SK-N-SH (cell line): ENCODE measurements at regions of chr9 and their contacts with region 1.

Region 1: DNA sequence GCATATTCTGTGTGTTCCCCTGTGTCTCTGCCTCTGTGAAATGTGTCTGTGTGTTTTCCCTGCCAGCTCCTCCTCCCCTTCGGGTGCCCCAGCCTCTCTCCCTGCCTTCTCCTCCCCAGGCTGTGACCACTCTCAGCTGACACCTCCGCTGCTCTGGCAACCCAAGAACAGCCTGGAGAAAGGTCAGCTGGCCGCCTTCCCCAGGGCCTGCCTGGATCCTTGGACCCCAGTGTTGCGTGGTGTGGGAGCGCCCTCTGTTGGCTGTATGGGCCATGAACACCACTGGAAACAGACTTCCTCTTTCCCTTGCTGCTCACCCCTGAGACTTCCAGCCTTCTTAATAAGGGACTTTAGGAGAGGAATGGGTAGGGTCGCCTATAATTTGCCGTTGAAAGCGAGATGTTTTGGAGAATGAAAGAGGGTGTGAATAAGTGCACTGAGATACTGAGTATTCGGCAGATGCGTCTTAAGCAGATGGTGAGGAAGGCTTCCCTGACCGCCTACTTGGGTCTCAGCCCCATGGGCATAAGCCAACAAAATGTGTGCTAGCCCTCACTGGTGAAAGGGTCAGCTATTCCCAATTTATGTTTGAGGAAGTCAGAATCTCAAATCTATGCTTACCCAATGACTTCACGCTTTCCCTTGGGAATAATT is 114.9 kb upstream of the TRIM32 start:
- DNase-seq: peak; percentile 84
- H3K4me3 ChIP-seq: no peak overlapping the region; a peak in 1 of 4 replicates
- H3K27ac ChIP-seq: peak overlapping the region in 1 of 2 experiments; percentile 16; a peak in 1 of 4 replicates
- H3K4me1 ChIP-seq: peaks cover 4 to 49% of the 10 kb centered on the region in 2 experiments; a peak in 2 of 4 replicates
- H3K27me3 ChIP-seq: no peaks in the 10 kb centered on the region
- CTCF ChIP-seq: peak; percentile 92
- EP300 ChIP-seq: 0 out of 4 replicates have a peak, but pooled peaks of 1 of the 2 experiments have one; percentile 10
- RAD21 ChIP-seq: peak; percentile 98

Region 2: DNA sequence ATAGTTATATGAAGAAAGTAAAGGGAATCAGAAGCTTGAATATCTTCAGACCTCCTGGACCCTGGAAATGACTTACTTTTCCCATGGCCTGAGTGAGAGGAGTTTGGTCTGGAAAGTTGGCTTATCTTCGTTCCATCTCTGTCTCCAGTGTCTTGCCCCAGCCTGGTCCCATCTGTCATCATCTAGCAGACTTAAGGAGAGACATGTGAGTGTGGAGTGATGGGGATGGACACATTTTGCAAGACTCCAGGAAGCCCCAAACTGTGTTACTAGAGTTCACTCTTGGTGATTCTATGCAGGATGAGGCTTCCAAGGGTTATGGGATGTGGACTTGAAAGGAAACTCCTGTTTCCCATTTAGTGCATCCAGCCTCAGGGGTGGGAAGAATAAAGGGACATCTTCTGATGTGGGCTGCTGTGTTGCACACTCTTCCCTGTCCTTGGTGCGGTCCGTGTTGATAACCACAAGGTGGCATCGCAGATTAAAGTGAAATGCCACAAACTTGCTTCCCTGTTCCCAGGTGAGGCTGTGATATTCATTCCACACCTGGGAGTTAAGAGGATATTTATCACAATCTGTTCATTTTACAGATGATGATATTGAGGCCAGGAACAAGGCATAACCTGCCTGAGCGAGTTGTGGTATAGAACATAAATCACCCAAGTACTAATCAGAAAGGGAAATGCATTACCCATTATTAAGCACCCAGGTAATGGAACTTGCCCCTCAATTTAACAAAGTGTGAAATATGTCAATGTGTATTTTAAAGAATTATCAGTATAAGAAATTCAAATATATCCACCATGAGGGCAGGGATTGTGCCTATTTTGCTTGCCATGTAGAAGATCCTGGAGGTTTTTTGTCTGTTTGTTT is 688.5 kb before region 1 on chr9:
- CTCF ChIA-PET with region 1: interaction called, 11 read pairs
- POLR2A ChIA-PET with region 1: no interaction called
- DNase-seq: peak; percentile 19
- H3K4me3 ChIP-seq: no peak overlapping the region
- H3K27ac ChIP-seq: no peak overlapping the region; a peak in 1 of 4 replicates
- H3K4me1 ChIP-seq: peaks cover 0 to 14% of the 10 kb centered on the region in 2 experiments; a peak in 2 of 4 replicates
- H3K27me3 ChIP-seq: no peaks in the 10 kb centered on the region
- CTCF ChIP-seq: peak; percentile 74
- EP300 ChIP-seq: no peak
- RAD21 ChIP-seq: peak; percentile 80

Region 3: GRCh38 chr9:116558818-116559540 is 13.2 kb before region 1 on chr9:
- CTCF ChIA-PET with region 1: interaction called, 19 read pairs
- POLR2A ChIA-PET with region 1: no interaction called
- DNase-seq: no peak
- H3K4me3 ChIP-seq: no peak overlapping the region
- H3K27ac ChIP-seq: no peak overlapping the region
- H3K4me1 ChIP-seq: no peaks in the 10 kb centered on the region; a peak in 1 of 4 replicates
- H3K27me3 ChIP-seq: no peaks in the 10 kb centered on the region
- CTCF ChIP-seq: no peak
- EP300 ChIP-seq: no peak
- RAD21 ChIP-seq: no peak

Region 4: DNA sequence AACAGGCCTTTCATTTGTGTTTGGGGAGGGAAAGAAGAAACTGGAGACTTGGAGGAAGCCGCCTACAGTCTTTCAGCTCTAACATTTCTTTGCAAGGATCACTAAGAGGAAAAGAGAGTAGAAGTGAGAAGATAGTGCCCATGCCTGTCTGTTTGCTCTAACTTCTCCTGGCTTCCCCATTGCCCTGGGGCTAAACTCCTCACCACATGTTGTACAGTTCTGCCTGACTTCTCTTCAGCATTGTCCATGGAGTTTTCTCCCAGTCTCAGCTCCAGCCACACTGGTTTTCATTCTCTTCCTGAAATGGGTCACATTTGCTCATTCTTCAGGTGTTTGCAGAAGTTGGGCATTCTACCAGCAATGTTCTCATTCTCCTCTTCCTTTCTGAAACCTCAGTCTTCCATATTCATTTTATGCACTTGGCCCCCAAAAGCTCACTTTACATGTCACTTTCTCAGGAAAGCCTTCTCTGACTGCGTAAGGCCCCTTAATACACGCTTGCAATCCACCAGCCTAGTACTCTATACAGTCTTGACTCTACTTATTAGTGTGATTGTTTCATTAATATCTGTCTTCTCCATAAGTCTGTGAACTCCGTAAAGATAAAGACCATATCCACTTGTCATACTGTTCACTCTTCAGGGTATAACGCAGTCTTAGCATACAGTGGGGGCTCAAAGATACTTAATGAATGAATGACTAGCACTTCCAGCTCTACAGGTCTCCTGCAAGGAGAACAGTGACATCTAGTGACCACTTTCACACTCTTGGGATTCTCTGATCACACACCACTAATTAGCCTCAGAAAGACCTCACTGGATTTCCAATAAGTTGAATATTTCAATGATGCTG is 74.7 kb after region 1 on chr9:
- CTCF ChIA-PET with region 1: interaction called, 18 read pairs
- POLR2A ChIA-PET with region 1: no interaction called
- DNase-seq: peak; percentile 25
- H3K4me3 ChIP-seq: no peak overlapping the region
- H3K27ac ChIP-seq: no peak overlapping the region
- H3K4me1 ChIP-seq: peaks cover 0 to 9% of the 10 kb centered on the region in 2 experiments; a peak in 2 of 4 replicates
- H3K27me3 ChIP-seq: no peaks in the 10 kb centered on the region
- CTCF ChIP-seq: peak; percentile 73
- EP300 ChIP-seq: no peak
- RAD21 ChIP-seq: peak; percentile 88